Mucosa of descending colon (tissue), 3 donors: ENCODE measurements at regions of chr2 and their contacts with region 1.

Region 1: GRCh38 chr2:66691031-66691507 is 256.1 kb downstream of the MEIS1 start:
- DNase-seq: no peak
- ATAC-seq: no peak
- H3K4me3 ChIP-seq: no peak overlapping the region
- H3K4me1 ChIP-seq: no peaks in the 10 kb centered on the region
- CTCF ChIP-seq: no peak

Region 2: GRCh38 chr2:66275984-66276383 is 415.1 kb before region 1 on chr2:
- intact Hi-C with region 1: no loop called
- DNase-seq: no peak
- ATAC-seq: no peak
- H3K4me3 ChIP-seq: no peak overlapping the region
- H3K4me1 ChIP-seq: no peaks in the 10 kb centered on the region
- CTCF ChIP-seq: no peak

Region 3: DNA sequence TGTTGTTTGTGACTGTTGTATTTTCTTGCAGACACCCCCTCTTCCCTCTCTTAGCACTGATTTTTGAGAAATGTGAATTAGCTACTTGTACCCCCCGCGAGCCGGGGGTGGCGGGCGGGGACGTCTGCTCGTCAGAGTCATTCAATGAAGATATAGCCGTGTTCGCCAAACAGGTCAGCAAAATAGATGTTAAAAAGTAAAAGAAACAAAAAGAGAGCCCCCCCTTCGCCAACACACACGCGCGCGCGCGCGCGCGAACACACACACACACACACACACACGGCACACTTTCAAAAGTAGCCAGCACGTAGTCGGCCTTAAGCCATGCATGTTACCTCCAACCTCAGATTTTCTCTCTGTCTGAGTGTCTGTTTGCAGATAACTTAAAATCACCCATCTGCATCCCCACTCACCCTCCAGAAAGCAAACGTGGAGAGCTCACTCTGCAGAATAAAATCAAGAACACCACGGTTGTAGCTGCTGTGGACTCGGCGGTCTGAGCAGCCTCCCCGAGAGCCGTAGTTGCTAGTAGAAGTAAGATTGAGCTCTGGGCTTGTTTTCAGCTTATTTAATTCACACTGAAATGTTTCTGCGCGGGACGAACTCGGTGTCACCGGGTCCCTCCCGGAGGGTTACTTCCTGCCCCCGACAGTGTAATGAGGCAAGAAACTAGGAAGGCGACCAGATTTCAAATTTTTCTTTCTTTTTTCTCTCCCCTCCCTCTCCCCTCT is 251.1 kb before region 1 on chr2:
- intact Hi-C with region 1: loop called in 1 of 2 experiments (anchors 5 kb)
- DNase-seq: no peak
- ATAC-seq: no peak
- H3K4me3 ChIP-seq: no peak overlapping the region
- H3K4me1 ChIP-seq: no peaks in the 10 kb centered on the region
- CTCF ChIP-seq: no peak

Region 4: GRCh38 chr2:66509326-66509811 is 181.7 kb before region 1 on chr2:
- intact Hi-C with region 1: no loop called
- DNase-seq: no peak
- ATAC-seq: no peak
- H3K4me3 ChIP-seq: no peak overlapping the region
- H3K4me1 ChIP-seq: no peaks in the 10 kb centered on the region
- CTCF ChIP-seq: no peak